ENCODE measurements at regions of chr1 and their contacts with region 1.

Region 1: DNA sequence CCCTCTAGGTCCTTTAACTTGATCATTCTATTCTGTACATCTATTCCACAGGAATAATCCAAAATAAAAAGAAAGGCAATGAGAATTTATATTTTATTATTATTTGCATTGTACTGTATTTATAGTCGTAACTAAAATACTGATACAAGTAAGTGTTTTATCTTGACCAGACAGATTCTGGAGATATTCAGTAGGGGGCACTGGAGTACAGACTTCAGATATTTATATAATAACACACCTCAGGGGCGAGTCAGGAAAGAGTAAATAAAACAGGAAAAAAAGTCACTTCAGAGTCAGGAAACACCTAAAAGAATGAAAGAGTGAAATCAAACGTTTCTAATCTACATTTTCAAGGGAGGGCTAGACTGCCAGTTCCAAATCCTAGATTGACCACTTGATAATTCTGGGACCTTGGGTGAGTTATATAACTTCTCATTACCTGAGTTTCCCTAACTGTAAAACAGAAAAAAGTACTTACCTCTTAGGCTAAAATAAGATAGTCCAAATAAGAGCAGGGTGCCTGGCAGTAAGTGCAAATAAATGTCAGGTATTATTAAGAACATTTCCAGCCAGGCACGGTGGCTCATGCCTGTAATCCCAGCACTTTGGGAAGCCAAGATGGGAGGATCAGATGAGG is 31.1 kb upstream of the MTF1 start:
- DNase-seq: peak; percentile 16
- ATAC-seq: peak; percentile 86
- H3K4me3 ChIP-seq: no peak overlapping the region
- H3K27ac ChIP-seq: no peak overlapping the region
- H3K4me1 ChIP-seq: no peaks in the 10 kb centered on the region
- H3K27me3 ChIP-seq: no peaks in the 10 kb centered on the region
- CTCF ChIP-seq: peak; percentile 43 to 65 (median 45); a peak in 5 of 6 replicates
- EP300 ChIP-seq: no peak
- POLR2A ChIP-seq: no peak
- RAD21 ChIP-seq: peak; percentile 83

Region 2: DNA sequence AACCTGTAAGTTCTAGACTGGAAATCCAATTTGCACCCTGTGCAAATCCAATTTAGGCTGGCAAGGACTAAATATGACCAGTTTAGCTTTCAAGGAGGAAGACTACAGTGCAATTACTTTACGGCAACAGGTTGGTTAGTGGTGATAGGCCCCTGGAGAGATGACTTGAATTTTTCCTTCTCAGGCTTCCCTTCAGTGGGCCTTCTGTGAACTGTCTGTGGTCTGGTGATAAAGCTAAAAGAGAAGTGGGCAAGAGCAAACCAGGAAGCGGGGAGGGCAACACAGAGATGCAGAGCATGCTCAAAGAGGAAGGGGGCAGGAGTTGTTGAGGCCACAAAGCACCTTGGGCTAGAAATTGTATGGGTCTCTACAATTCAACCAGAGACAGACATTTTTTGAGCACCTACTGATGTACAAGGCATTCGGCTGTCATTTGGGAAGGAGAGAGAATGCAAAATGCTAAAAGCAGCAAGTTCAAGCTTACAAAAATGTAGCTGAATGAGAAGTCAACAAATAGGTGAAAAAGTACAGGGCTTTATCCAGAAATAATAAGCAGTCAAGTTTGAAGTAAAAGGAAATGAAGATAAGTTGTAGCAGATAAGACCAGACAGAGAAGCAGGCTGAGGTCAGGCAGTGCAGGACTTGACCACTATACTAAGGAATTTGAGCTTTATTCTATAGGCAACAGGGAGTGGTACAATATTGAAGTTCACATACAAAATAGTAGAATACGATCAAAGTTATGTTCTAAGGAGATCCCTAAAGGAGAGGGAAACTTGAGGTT is 32.5 kb after region 1 on chr1:
- CTCF ChIA-PET with region 1: interaction called, 10 read pairs
- POLR2A ChIA-PET with region 1: interaction called, 9 read pairs
- RAD21 ChIA-PET with region 1: interaction called, 8 read pairs
- SMC1A ChIA-PET with region 1: interaction called, 7 read pairs
- in situ Hi-C with region 1: no loop called
- intact Hi-C with region 1: no loop called
- DNase-seq: peak; percentile 89
- ATAC-seq: peak; percentile 80
- H3K4me3 ChIP-seq: peak overlapping the region; percentile 39; the same call in 1 of the 2 replicates
- H3K27ac ChIP-seq: peak overlapping the region; percentile 79
- H3K4me1 ChIP-seq: peaks cover 45% of the 10 kb centered on the region
- H3K27me3 ChIP-seq: no peaks in the 10 kb centered on the region
- CTCF ChIP-seq: 0 out of 6 replicates have a peak, but pooled peaks of 1 of the 3 experiments have one; percentile 2
- EP300 ChIP-seq: peak; percentile 38 to 53; a peak in 3 of 4 replicates
- POLR2A ChIP-seq: no peak
- RAD21 ChIP-seq: no peak

Region 3: GRCh38 chr1:37965301-37965700 is 74.8 kb after region 1 on chr1:
- CTCF ChIA-PET with region 1: interaction called, 3 read pairs
- POLR2A ChIA-PET with region 1: no interaction called
- RAD21 ChIA-PET with region 1: no interaction called
- SMC1A ChIA-PET with region 1: interaction called, 3 read pairs
- in situ Hi-C with region 1: loop called (anchors 5 kb)
- intact Hi-C with region 1: no loop called
- DNase-seq: no peak
- ATAC-seq: no peak
- H3K4me3 ChIP-seq: no peak overlapping the region
- H3K27ac ChIP-seq: no peak overlapping the region
- H3K4me1 ChIP-seq: no peaks in the 10 kb centered on the region
- H3K27me3 ChIP-seq: no peaks in the 10 kb centered on the region
- CTCF ChIP-seq: no peak
- EP300 ChIP-seq: no peak
- POLR2A ChIP-seq: no peak
- RAD21 ChIP-seq: no peak

Region 4: GRCh38 chr1:37989361-37989930 is 99.0 kb after region 1 on chr1:
- CTCF ChIA-PET with region 1: interaction called, 5 read pairs
- POLR2A ChIA-PET with region 1: interaction called, 3 read pairs
- RAD21 ChIA-PET with region 1: interaction called, 3 read pairs
- SMC1A ChIA-PET with region 1: interaction called, 5 read pairs
- in situ Hi-C with region 1: no loop called
- intact Hi-C with region 1: loop called (anchors 1 kb)
- DNase-seq: no peak
- ATAC-seq: peak; percentile 48
- H3K4me3 ChIP-seq: peak overlapping the region; percentile 95
- H3K27ac ChIP-seq: peak overlapping the region; percentile 83
- H3K4me1 ChIP-seq: peaks cover 4% of the 10 kb centered on the region; the same call in 1 of the 2 replicates
- H3K27me3 ChIP-seq: no peaks in the 10 kb centered on the region
- CTCF ChIP-seq: no peak
- EP300 ChIP-seq: no peak
- POLR2A ChIP-seq: no peak
- RAD21 ChIP-seq: no peak

Region 5: GRCh38 chr1:38834937-38835827 is 944.7 kb after region 1 on chr1:
- CTCF ChIA-PET with region 1: no interaction called
- POLR2A ChIA-PET with region 1: no interaction called
- RAD21 ChIA-PET with region 1: no interaction called
- SMC1A ChIA-PET with region 1: no interaction called
- in situ Hi-C with region 1: loop called (anchors 25 kb)
- intact Hi-C with region 1: no loop called
- DNase-seq: peak; percentile 60
- ATAC-seq: peak; percentile 98
- H3K4me3 ChIP-seq: no peak overlapping the region
- H3K27ac ChIP-seq: no peak overlapping the region
- H3K4me1 ChIP-seq: no peaks in the 10 kb centered on the region
- H3K27me3 ChIP-seq: peaks cover 0 to 2% of the 10 kb centered on the region in 2 experiments; a peak in 2 of 4 replicates
- CTCF ChIP-seq: peak; percentile 68 to 86 (median 77)
- EP300 ChIP-seq: no peak
- POLR2A ChIP-seq: no peak
- RAD21 ChIP-seq: peak; percentile 84